HEK293 (cell line): ENCODE measurements at regions of chr15 and their contacts with region 1.

Region 1: GRCh38 chr15:43881944-43882343 is 55.1 kb downstream of the WDR76 start:
- H3K4me3 ChIP-seq: no peak overlapping the region
- H3K27ac ChIP-seq: no peak overlapping the region
- H3K4me1 ChIP-seq: no peaks in the 10 kb centered on the region
- CTCF ChIP-seq: no peak

Region 2: GRCh38 chr15:43868406-43868805 is 13.5 kb before region 1 on chr15:
- CTCF ChIA-PET with region 1: interaction called, 12 read pairs
- POLR2A ChIA-PET with region 1: no interaction called
- H3K4me3 ChIP-seq: no peak overlapping the region
- H3K27ac ChIP-seq: no peak overlapping the region
- H3K4me1 ChIP-seq: no peaks in the 10 kb centered on the region; the same call in 1 of the 2 replicates
- CTCF ChIP-seq: no peak